PC-9 (cell line): ENCODE measurements at regions of chr2 and their contacts with region 1.

Region 1: GRCh38 chr2:177332041-177332991 is 60.3 kb upstream of the AGPS start:
- DNase-seq: peak; percentile 58
- H3K4me3 ChIP-seq: no peak overlapping the region
- H3K27ac ChIP-seq: no peak overlapping the region
- H3K4me1 ChIP-seq: peaks cover 10% of the 10 kb centered on the region
- H3K27me3 ChIP-seq: no peaks in the 10 kb centered on the region
- CTCF ChIP-seq: peak; percentile 87

Region 2: DNA sequence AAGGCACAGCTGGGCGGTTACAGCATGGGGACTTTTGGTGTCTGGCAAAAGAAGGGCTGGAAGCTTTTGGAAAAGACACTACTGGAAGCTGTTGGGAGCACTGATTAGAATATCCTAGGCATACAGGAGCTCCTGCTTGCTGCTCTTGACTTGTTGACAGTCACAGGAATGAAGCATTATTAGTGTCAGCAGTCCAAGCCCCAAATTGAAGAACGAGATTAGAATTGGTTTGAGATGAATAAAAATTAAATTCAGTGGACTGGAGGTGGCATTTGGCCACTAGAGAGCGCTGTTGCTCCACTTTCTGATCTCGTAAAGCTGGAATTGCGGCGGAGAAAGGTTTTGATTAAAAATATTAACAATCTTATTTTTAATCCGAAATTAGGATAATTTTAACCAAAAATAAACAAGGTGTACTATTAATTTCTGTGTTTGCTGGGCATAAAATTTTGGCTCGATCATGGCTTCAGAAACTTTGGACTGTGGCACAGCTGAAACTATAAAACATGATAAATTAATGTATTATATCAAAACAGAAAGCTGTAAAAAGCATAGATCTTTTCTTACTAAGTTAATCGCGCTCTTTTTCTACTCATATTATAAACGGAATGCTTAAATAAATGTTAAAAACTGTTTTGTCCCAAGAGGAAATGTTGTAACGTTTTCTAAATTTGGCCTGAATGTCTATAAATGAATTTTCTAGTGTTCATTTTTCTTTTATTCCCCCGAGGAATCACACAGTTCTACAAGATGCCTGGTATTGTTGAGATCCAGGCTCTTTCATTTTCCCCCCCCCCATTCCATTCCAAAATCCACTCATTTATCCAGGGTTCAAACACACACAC is 1205.2 kb before region 1 on chr2:
- CTCF ChIA-PET with region 1: interaction called, 20 read pairs
- POLR2A ChIA-PET with region 1: no interaction called
- intact Hi-C with region 1: loop called (anchors 5 kb)
- DNase-seq: peak; percentile 43 to 67
- H3K4me3 ChIP-seq: 0 out of 2 replicates have a peak overlapping the region, but pooled peaks have one; percentile 3
- H3K27ac ChIP-seq: no peak overlapping the region
- H3K4me1 ChIP-seq: no peaks in the 10 kb centered on the region
- H3K27me3 ChIP-seq: peaks cover 52% of the 10 kb centered on the region
- CTCF ChIP-seq: peak; percentile 100

Region 3: DNA sequence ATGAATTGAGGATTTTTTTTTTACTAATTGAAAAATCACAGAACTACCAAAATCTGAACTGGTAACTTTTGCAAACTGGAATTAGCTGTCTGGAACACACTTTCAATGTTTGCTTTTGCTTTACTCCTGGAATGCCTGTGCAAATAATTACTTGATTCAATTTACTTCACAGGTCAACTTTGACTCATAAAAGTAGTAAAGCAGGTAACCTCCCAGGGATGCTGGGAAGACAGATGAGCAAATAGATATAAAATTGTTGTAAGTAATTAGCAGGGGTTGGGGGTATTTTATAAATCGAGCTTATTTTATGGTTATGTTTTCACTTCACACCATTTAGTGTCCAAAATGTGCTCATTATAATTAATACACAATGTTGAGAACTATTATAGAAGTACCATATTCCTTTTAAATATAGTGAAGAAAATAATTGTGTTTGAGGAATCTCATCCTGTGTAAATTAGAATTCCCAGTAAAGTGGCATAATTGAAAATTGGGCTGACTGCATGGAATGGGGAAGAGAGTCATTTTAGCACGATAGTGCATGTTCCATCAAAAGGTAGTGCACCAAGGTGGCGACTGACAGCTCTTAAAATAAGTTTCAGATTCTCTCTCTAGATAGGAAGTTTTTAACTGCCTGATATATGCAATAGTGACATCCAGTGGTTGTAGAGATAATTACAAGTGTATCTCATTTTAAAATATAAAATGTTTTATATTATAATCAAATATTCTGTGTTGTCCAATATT is 517.8 kb before region 1 on chr2:
- CTCF ChIA-PET with region 1: no interaction called
- POLR2A ChIA-PET with region 1: no interaction called
- intact Hi-C with region 1: loop called (anchors 10 kb)
- DNase-seq: no peak
- H3K4me3 ChIP-seq: no peak overlapping the region
- H3K27ac ChIP-seq: no peak overlapping the region
- H3K4me1 ChIP-seq: no peaks in the 10 kb centered on the region
- H3K27me3 ChIP-seq: peaks cover 18% of the 10 kb centered on the region
- CTCF ChIP-seq: peak; percentile 87

Region 4: DNA sequence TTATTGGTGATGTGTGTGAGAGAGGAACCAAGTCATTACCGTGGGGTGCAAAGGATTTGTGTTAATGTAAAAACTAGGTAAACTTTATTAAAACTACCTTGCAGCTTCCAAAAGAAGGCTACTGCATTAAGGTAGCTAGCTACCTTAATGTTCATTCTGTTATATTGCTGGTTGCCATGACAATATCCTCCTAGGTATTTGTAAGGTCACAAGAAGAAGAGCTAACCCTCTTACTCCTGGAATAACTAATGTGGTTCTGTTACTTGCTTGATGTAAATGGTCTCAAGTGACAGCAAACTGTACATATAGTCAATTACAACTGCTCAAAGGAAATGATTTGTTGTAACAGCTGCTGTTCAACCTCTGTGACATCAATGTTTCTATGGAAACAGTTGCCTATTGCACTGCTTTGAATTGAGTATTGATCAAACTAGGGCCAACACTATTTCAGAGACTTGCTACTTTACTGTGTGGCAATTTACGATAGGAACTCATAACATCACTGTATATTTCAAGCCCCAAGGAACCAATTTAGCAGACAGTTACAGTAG is 439.6 kb before region 1 on chr2:
- CTCF ChIA-PET with region 1: no interaction called
- POLR2A ChIA-PET with region 1: no interaction called
- intact Hi-C with region 1: no loop called
- DNase-seq: no peak
- H3K4me3 ChIP-seq: no peak overlapping the region
- H3K27ac ChIP-seq: no peak overlapping the region
- H3K4me1 ChIP-seq: no peaks in the 10 kb centered on the region
- H3K27me3 ChIP-seq: 0 out of 2 replicates have a peak, but pooled peaks cover 4% of the 10 kb centered on the region
- CTCF ChIP-seq: no peak

Region 5: DNA sequence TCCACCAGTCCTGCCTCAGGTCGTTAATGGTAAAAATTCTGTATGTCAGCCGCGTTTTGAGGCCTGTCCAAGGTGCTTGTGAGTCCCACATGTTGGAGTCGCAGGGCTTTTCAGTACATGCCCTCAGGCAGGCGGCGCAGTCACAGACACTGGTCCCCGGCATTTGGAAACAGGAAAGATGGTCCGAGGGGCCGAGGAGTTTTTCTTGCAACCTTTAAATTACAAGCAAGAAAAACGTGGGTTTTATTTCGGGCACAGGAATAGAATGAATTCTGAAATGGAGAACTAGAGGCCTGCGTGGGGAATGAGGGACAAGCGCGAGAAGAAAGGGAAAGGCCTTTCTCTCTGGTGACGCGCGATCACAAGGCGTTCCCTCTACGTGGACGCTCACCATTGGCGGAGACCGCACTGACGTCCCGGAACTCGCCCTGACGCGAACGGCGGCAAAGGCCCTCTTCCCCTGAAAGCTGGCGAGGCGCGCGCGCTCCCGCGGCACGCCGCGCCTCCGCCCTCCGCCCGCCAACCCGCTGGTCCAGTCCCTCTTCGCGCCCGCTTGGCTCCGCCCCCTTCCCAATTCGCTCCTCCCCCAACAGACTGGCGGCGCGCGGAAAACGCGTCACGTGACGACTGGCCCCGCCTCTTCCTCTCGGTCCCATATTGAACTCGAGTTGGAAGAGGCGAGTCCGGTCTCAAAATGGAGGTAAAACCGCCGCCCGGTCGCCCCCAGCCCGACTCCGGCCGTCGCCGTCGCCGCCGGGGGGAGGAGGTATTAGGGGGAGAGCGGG is 120.0 kb before region 1 on chr2 and contains the start of gene HNRNPA3:
- CTCF ChIA-PET with region 1: no interaction called
- POLR2A ChIA-PET with region 1: no interaction called
- intact Hi-C with region 1: loop called (anchors 5 kb)
- DNase-seq: peak; percentile 98 to 100
- H3K4me3 ChIP-seq: peak within 1 kb of the TSS; percentile 76
- H3K27ac ChIP-seq: peak within 1 kb of the TSS; percentile 97
- H3K4me1 ChIP-seq: peaks cover 30% of the 10 kb centered on the region
- H3K27me3 ChIP-seq: no peaks in the 10 kb centered on the region
- CTCF ChIP-seq: peak; percentile 27; the same call in 1 of the 2 replicates
- total RNA-seq, gene HNRNPA3: 245 and 290 TPM in 2 replicates

Region 6: DNA sequence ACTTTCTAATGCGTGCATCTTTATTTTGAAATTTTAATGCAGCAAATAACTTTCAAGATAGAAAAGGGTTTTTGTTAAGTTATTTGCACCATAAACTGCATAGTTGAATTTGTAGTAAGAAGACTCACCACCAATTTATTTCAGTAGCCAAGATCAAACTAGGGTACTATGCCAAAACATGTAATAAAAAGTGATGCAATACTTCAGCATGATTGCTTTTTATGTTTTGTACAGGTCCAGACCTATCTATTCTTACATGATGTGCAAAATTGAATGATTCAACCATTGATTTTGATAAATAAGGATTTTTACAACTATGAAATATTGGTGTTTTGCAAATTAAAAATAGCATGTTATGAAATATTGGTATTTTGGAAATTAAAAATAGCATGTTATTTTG is 87.0 kb after region 1 on chr2:
- CTCF ChIA-PET with region 1: interaction called, 6 read pairs
- POLR2A ChIA-PET with region 1: no interaction called
- intact Hi-C with region 1: loop called (anchors 1 kb)
- DNase-seq: no peak
- H3K4me3 ChIP-seq: no peak overlapping the region
- H3K27ac ChIP-seq: peak overlapping the region; percentile 43
- H3K4me1 ChIP-seq: peaks cover 11% of the 10 kb centered on the region
- H3K27me3 ChIP-seq: no peaks in the 10 kb centered on the region
- CTCF ChIP-seq: no peak

Region 7: DNA sequence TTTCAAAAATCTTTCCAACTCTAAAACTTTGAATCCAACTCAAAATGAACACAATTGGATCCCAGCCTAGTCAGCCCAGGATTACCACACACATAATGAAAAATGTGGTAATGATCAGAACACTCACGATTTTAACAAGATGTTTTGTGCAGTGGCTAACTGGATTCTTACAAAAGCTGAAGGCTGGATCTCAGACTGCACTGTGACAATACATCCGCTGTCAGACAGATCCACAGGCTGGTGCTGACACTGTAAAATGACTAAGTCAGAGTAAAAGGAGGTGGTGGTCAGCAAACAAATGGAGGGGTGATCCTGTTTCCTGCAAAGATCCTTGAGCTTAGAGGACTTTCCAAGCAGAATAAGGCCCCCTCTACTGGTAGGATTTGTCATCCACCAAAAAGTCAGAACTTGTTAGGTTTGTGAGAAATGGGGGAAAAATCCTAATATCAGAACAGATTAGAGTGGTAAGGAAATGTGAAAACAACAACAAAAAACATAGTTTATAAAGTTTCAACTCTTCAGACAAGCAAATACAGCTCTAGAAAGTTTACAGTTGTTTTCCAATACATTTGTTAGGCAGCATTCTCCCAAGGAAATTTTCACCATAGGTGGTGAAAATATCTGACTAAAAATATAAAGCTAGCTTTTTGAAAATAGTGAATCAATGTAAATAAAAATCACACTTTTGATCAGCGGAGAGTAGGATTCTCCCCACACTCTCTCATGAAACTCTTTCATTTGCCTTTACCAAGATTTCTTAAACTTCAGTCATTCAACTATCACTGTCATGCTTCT is 272.2 kb after region 1 on chr2:
- CTCF ChIA-PET with region 1: no interaction called
- POLR2A ChIA-PET with region 1: no interaction called
- intact Hi-C with region 1: loop called (anchors 1 kb)
- DNase-seq: peak in 1 of 2 experiments; percentile 16
- H3K4me3 ChIP-seq: no peak overlapping the region
- H3K27ac ChIP-seq: no peak overlapping the region
- H3K4me1 ChIP-seq: no peaks in the 10 kb centered on the region
- H3K27me3 ChIP-seq: no peaks in the 10 kb centered on the region
- CTCF ChIP-seq: peak; percentile 84

Region 8: DNA sequence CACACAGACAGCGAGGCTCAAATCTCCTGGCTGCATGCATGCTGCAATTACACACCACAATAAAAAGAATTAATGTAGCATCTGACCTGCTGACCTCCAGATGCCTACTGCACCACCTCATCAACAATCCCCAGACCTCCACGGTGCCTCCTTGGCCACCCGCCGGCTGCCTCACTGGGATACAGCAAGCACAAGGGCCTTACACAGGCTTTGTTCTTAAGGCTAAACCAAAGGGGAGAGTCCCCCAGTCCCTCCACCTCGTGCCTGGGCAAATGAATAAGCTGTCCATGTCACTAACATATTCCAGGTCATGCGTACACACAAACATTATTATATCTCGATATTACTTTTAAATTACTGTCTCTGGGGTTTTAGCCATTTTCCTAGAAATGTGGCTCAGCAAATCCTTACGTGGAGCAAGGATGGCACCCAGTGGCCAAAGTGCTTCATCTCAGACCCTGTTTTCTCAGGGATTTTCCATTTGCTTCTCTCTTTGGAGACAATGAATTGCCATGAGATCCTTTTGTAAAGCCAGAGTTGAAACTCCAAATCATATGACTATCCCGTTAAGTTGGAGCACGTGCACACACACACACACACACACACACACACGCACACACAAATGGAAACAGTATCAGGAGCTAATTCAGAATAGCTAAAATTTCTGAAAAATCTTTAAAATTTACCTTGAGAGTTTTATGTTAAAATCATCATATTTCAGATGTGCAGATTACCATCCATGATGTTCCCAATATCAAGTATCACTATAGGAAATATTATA is 426.5 kb after region 1 on chr2:
- CTCF ChIA-PET with region 1: interaction called, 6 read pairs
- POLR2A ChIA-PET with region 1: no interaction called
- intact Hi-C with region 1: loop called (anchors 1 kb)
- DNase-seq: peak in 1 of 2 experiments; percentile 53
- H3K4me3 ChIP-seq: no peak overlapping the region
- H3K27ac ChIP-seq: no peak overlapping the region
- H3K4me1 ChIP-seq: no peaks in the 10 kb centered on the region
- H3K27me3 ChIP-seq: no peaks in the 10 kb centered on the region
- CTCF ChIP-seq: peak; percentile 76